ENCODE measurements at regions of chr7 and their contacts with region 1.

Region 1: DNA sequence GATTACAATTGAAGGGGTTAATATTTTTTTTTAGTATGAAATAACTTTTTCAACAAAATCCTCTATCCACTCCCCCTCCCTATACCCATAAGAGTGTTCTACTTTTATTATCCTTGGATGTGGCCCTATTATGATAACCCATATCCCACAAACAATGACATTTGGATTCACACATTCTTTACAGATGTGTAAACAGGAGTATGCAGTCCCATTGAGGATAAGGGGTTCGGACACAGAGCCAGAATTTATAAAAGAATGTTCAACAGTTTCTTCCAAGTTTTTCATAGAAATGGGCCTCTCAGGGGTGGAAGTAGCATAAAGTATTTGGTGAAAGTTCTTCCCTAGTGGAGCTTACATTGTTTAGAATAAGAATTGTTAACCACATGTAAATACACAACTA is 16.1 kb upstream of the PCLO start:
- DNase-seq: no peak
- ATAC-seq: no peak
- H3K4me3 Mint-ChIP-seq: no peak overlapping the region
- H3K27ac Mint-ChIP-seq: no peak overlapping the region
- H3K4me1 Mint-ChIP-seq: no peaks in the 10 kb centered on the region
- H3K27me3 Mint-ChIP-seq: no peaks in the 10 kb centered on the region

Region 2: GRCh38 chr7:82534683-82535082 is 644.1 kb before region 1 on chr7:
- CTCF ChIA-PET with region 1: no interaction called
- POLR2A ChIA-PET with region 1: no interaction called
- intact Hi-C with region 1: no loop called
- DNase-seq: no peak
- ATAC-seq: no peak
- H3K4me3 Mint-ChIP-seq: no peak overlapping the region
- H3K27ac Mint-ChIP-seq: no peak overlapping the region
- H3K4me1 Mint-ChIP-seq: no peaks in the 10 kb centered on the region
- H3K27me3 Mint-ChIP-seq: no peaks in the 10 kb centered on the region

Region 3: DNA sequence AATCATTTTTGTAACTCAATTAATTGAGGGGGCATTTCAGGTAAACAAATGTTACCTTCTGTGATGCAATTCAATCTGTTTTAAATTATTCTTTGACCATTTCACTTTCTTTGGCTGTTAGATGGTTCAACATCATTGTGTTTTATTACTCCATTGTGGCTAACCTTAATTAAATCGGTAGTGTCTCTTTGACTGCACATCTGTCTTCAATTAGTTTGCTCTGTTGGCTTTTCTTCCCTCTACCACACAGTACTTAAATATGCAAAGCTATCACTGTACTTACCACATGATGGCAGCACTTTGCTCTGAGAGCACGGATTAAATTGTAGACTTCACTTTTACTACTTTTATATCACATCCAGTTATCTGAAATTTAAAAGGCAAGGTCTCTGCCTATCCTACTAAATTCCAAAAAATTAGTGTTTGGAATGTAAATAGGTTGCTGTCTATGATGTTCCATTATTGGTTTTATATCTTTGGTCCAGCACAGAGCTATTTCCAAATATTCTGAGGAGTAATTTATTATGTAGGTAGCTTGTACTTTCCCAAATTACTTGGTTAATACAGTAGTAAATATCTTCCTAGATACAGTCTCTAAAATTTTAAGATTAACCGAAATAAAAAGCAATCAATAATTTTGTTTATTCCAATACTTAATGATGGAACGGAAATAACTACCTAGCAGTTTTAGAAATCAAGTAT is 368.1 kb before region 1 on chr7:
- CTCF ChIA-PET with region 1: no interaction called
- POLR2A ChIA-PET with region 1: no interaction called
- intact Hi-C with region 1: loop called in 1 of 2 experiments (anchors 10 kb)
- DNase-seq: peak; percentile 4
- ATAC-seq: no peak
- H3K4me3 Mint-ChIP-seq: no peak overlapping the region
- H3K27ac Mint-ChIP-seq: no peak overlapping the region
- H3K4me1 Mint-ChIP-seq: no peaks in the 10 kb centered on the region
- H3K27me3 Mint-ChIP-seq: no peaks in the 10 kb centered on the region

Region 4: GRCh38 chr7:83347945-83348444 is 169.2 kb after region 1 on chr7:
- CTCF ChIA-PET with region 1: no interaction called
- POLR2A ChIA-PET with region 1: no interaction called
- intact Hi-C with region 1: no loop called
- DNase-seq: no peak
- ATAC-seq: no peak
- H3K4me3 Mint-ChIP-seq: no peak overlapping the region
- H3K27ac Mint-ChIP-seq: no peak overlapping the region
- H3K4me1 Mint-ChIP-seq: no peaks in the 10 kb centered on the region
- H3K27me3 Mint-ChIP-seq: no peaks in the 10 kb centered on the region

Region 5: GRCh38 chr7:83388436-83388835 is 209.6 kb after region 1 on chr7:
- CTCF ChIA-PET with region 1: no interaction called
- POLR2A ChIA-PET with region 1: no interaction called
- intact Hi-C with region 1: no loop called
- DNase-seq: no peak
- ATAC-seq: no peak
- H3K4me3 Mint-ChIP-seq: no peak overlapping the region
- H3K27ac Mint-ChIP-seq: no peak overlapping the region
- H3K4me1 Mint-ChIP-seq: no peaks in the 10 kb centered on the region
- H3K27me3 Mint-ChIP-seq: no peaks in the 10 kb centered on the region

Measured in activated CD4-positive, alpha-beta T cell treated with anti-CD3 and anti-CD28 coated beads for 36 hours (primary cell).